Caco-2 (cell line): ENCODE measurements at regions of chr6 and their contacts with region 1.

Region 1: DNA sequence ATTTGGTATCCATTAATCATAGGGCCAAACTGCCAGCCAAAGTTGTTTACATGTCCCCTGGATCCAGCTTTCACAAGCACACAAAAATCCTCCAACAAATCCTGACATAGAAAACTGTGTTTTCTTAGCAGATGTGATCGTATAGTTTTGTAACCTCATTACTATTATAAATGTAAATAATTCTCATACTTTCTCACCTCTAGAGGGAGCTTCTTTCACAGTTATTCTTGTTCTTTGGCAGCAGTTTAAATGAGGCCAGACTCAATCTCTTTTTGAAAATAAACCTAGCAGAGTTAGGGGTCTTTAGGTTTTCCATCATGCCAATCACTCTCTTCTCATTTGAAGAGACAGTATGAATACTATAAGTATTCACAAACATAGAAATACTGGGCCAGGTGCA is 17.0 kb upstream of the ZNF318 start:
- DNase-seq: no peak
- H3K4me3 ChIP-seq: no peak overlapping the region
- H3K4me3 Mint-ChIP-seq: no peak overlapping the region
- H3K27ac Mint-ChIP-seq: no peak overlapping the region
- H3K4me1 ChIP-seq: peaks cover 23% of the 10 kb centered on the region
- H3K4me1 Mint-ChIP-seq: peaks cover 18% of the 10 kb centered on the region
- H3K27me3 ChIP-seq: no peaks in the 10 kb centered on the region
- H3K27me3 Mint-ChIP-seq: no peaks in the 10 kb centered on the region
- CTCF ChIP-seq: peak; percentile 15 to 54

Region 2: GRCh38 chr6:43454696-43455530 is 68.4 kb after region 1 on chr6:
- CTCF ChIA-PET with region 1: interaction called, 6 read pairs
- POLR2A ChIA-PET with region 1: no interaction called
- intact Hi-C with region 1: loop called (anchors 2 kb)
- DNase-seq: peak; percentile 78 to 89
- H3K4me3 ChIP-seq: peak overlapping the region; percentile 62
- H3K4me3 Mint-ChIP-seq: peak overlapping the region; percentile 78
- H3K27ac Mint-ChIP-seq: no peak overlapping the region
- H3K4me1 ChIP-seq: peaks cover 7% of the 10 kb centered on the region; the same call in 1 of the 2 replicates
- H3K4me1 Mint-ChIP-seq: no peaks in the 10 kb centered on the region
- H3K27me3 ChIP-seq: no peaks in the 10 kb centered on the region
- H3K27me3 Mint-ChIP-seq: no peaks in the 10 kb centered on the region
- CTCF ChIP-seq: no peak